CD4-positive, alpha-beta T cell (primary cell): ENCODE measurements at regions of chr12 and their contacts with region 1.

Region 1: GRCh38 chr12:92059976-92060375 is 85.7 kb downstream of the BTG1 start:
- DNase-seq: no peak
- ATAC-seq: no peak
- H3K4me3 ChIP-seq: no peak overlapping the region
- H3K4me3 Mint-ChIP-seq: no peak overlapping the region
- H3K27ac ChIP-seq: no peak overlapping the region
- H3K27ac Mint-ChIP-seq: peak overlapping the region; percentile 90
- H3K4me1 ChIP-seq: peaks cover 27% of the 10 kb centered on the region
- H3K4me1 Mint-ChIP-seq: peaks cover 99% of the 10 kb centered on the region
- H3K27me3 ChIP-seq: no peaks in the 10 kb centered on the region
- H3K27me3 Mint-ChIP-seq: no peaks in the 10 kb centered on the region
- CTCF ChIP-seq: no peak

Region 2: DNA sequence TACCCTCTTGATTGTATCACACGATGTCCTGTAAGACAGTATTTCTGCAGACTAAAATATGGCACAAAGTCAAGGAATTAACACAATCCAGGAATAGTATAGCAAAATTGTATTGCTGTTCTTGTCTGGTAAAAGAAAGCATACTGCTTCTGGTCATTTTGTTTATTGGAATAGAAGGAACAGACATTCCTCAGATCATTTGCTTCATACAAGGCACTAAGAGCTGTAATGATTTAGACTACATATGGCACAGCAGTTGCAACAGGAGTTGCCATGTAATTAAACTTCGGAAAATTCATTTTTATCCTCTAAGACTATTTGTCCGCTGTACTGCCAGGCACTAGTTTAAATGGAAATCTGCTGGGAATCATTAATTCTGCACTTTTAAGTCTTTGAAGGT is 994.6 kb before region 1 on chr12:
- CTCF ChIA-PET with region 1: no interaction called
- POLR2A ChIA-PET with region 1: no interaction called
- intact Hi-C with region 1: no loop called
- DNase-seq: no peak
- ATAC-seq: no peak
- H3K4me3 ChIP-seq: no peak overlapping the region
- H3K4me3 Mint-ChIP-seq: no peak overlapping the region
- H3K27ac ChIP-seq: no peak overlapping the region
- H3K27ac Mint-ChIP-seq: no peak overlapping the region
- H3K4me1 ChIP-seq: no peaks in the 10 kb centered on the region
- H3K4me1 Mint-ChIP-seq: no peaks in the 10 kb centered on the region
- H3K27me3 ChIP-seq: no peaks in the 10 kb centered on the region
- H3K27me3 Mint-ChIP-seq: peaks cover 6% of the 10 kb centered on the region
- CTCF ChIP-seq: no peak

Region 3: GRCh38 chr12:91978143-91978542 is 81.8 kb before region 1 on chr12:
- CTCF ChIA-PET with region 1: no interaction called
- POLR2A ChIA-PET with region 1: no interaction called
- intact Hi-C with region 1: loop called in 1 of 2 experiments (anchors 1 kb)
- DNase-seq: peak in 12 of 14 experiments; percentile 8 to 85 (median 44)
- ATAC-seq: peak; percentile 88
- H3K4me3 ChIP-seq: no peak overlapping the region
- H3K4me3 Mint-ChIP-seq: peak overlapping the region; percentile 3
- H3K27ac ChIP-seq: peak overlapping the region; percentile 2 to 52
- H3K27ac Mint-ChIP-seq: peak overlapping the region; percentile 79
- H3K4me1 ChIP-seq: peaks cover 24% of the 10 kb centered on the region
- H3K4me1 Mint-ChIP-seq: peaks cover 55% of the 10 kb centered on the region
- H3K27me3 ChIP-seq: no peaks in the 10 kb centered on the region
- H3K27me3 Mint-ChIP-seq: no peaks in the 10 kb centered on the region
- CTCF ChIP-seq: no peak

Region 4: DNA sequence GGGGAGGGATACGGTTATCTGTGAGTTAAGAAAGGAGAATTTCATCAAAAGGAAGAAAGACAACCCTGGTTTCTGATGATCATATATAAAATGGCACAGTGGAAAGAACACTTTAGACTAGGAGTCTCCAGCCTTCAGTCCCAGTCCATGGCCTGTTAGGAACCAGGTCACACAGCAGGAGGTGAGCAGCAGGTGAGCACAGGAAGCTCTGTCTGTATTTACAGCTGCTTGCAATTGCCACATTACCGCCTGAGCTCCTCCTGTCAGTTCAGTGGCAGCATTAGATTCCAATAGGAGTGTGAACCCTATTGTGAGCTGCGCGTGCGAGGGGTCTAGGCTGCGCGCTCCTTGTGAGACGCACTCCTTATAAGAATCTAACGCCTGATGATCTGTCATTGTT is 52.2 kb before region 1 on chr12:
- CTCF ChIA-PET with region 1: no interaction called
- POLR2A ChIA-PET with region 1: no interaction called
- intact Hi-C with region 1: loop called in 1 of 2 experiments (anchors 5 kb)
- DNase-seq: peak in 2 of 14 experiments; percentile 32 to 34
- ATAC-seq: peak; percentile 35
- H3K4me3 ChIP-seq: no peak overlapping the region
- H3K4me3 Mint-ChIP-seq: no peak overlapping the region
- H3K27ac ChIP-seq: no peak overlapping the region
- H3K27ac Mint-ChIP-seq: peak overlapping the region; percentile 12
- H3K4me1 ChIP-seq: peaks cover 12% of the 10 kb centered on the region
- H3K4me1 Mint-ChIP-seq: peaks cover 91% of the 10 kb centered on the region
- H3K27me3 ChIP-seq: no peaks in the 10 kb centered on the region
- H3K27me3 Mint-ChIP-seq: no peaks in the 10 kb centered on the region
- CTCF ChIP-seq: no peak

Region 5: GRCh38 chr12:92078167-92079053 is 18.4 kb after region 1 on chr12:
- CTCF ChIA-PET with region 1: interaction called, 3 read pairs
- POLR2A ChIA-PET with region 1: interaction called, 3 read pairs
- intact Hi-C with region 1: loop called (anchors 2 kb)
- DNase-seq: no peak
- ATAC-seq: no peak
- H3K4me3 ChIP-seq: no peak overlapping the region
- H3K4me3 Mint-ChIP-seq: peak overlapping the region; percentile 12
- H3K27ac ChIP-seq: no peak overlapping the region
- H3K27ac Mint-ChIP-seq: peak overlapping the region; percentile 46
- H3K4me1 ChIP-seq: peaks cover 15% of the 10 kb centered on the region
- H3K4me1 Mint-ChIP-seq: peaks cover 78% of the 10 kb centered on the region
- H3K27me3 ChIP-seq: no peaks in the 10 kb centered on the region
- H3K27me3 Mint-ChIP-seq: no peaks in the 10 kb centered on the region
- CTCF ChIP-seq: no peak

Region 6: DNA sequence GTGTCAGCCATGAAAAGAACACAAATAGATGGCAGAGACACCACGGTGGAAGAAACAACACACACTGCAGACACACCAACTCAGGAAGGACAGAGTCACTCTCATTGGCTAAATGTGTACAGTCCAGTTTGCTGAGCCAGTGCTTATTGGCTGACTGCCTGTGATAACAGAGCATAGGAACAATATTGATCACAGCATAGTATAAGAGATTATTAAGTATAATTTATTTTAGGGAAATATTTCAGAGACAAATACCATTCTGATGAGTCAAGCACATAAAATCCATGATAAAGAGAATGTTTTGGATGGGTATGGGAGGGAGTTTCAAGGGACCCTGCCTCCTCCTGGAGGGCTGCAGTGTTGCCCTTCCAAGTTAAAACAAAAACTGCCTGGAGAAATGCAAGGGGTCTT is 34.8 kb after region 1 on chr12:
- CTCF ChIA-PET with region 1: no interaction called
- POLR2A ChIA-PET with region 1: interaction called, 3 read pairs
- intact Hi-C with region 1: loop called in 1 of 2 experiments (anchors 5 kb)
- DNase-seq: no peak
- ATAC-seq: no peak
- H3K4me3 ChIP-seq: no peak overlapping the region
- H3K4me3 Mint-ChIP-seq: no peak overlapping the region
- H3K27ac ChIP-seq: no peak overlapping the region
- H3K27ac Mint-ChIP-seq: no peak overlapping the region
- H3K4me1 ChIP-seq: peaks cover 14% of the 10 kb centered on the region
- H3K4me1 Mint-ChIP-seq: peaks cover 79% of the 10 kb centered on the region
- H3K27me3 ChIP-seq: no peaks in the 10 kb centered on the region
- H3K27me3 Mint-ChIP-seq: no peaks in the 10 kb centered on the region
- CTCF ChIP-seq: no peak

Region 7: GRCh38 chr12:92485351-92486348 is 425.7 kb after region 1 on chr12:
- CTCF ChIA-PET with region 1: no interaction called
- POLR2A ChIA-PET with region 1: no interaction called
- intact Hi-C with region 1: no loop called
- DNase-seq: no peak
- ATAC-seq: no peak
- H3K4me3 ChIP-seq: no peak overlapping the region
- H3K4me3 Mint-ChIP-seq: no peak overlapping the region
- H3K27ac ChIP-seq: no peak overlapping the region
- H3K27ac Mint-ChIP-seq: peak overlapping the region; percentile 24
- H3K4me1 ChIP-seq: no peaks in the 10 kb centered on the region
- H3K4me1 Mint-ChIP-seq: peaks cover 19% of the 10 kb centered on the region
- H3K27me3 ChIP-seq: no peaks in the 10 kb centered on the region
- H3K27me3 Mint-ChIP-seq: no peaks in the 10 kb centered on the region
- CTCF ChIP-seq: no peak